Sigmoid colon (tissue), 7 donors: ENCODE measurements at regions of chr7 and their contacts with region 1.

Region 1: DNA sequence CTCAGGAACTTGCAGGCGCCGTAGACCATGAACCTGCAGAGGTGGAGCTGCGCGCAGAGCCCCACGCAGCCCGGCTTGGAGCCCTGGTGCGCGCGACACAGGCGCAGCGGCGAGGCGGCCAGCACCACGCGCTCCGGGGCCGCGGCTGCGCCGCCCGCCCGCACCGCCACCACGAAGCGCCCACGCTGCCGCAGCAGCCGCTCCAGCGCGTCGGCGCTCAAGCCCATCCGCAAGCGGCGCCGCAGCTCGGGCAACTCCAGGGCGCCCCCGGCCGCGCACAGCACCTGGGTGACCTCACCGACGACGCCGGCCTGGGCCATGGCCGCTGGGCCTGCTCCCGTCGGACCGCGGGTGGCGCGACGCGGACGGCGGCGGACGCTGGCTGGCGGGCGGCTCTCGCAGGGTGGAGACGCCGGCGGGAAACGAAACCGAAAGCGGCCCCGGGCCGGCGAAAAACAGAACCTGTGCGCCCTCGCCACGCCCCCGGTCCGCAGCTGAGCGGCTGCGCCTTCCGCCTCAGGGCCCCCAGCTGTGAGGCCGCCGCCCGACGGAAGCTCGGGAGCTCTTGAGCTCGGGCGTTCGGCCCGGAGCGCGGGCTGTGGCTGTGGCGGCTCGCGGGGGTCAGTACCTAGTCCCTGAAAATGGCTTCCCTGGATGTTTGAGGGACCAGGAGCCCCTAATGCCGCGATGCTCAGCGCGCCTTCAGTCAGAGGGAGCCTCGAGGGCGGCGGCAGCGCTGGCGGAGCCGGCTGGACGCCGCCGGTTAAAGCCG is at the start of gene PARP12:
- DNase-seq: peak; percentile 90
- H3K4me3 ChIP-seq: peak within 1 kb of the TSS; percentile 70 to 82 (median 72)
- H3K27ac ChIP-seq: peak within 1 kb of the TSS; percentile 88 to 91 (median 90)
- H3K4me1 ChIP-seq: peaks cover 0 to 36% (median 22%) of the 10 kb centered on the region in 4 donors
- H3K27me3 ChIP-seq: no peaks in the 10 kb centered on the region
- CTCF ChIP-seq: no peak
- EP300 ChIP-seq: no peak
- POLR2A ChIP-seq: peak in 1 of 2 donors; percentile 23
- total RNA-seq, gene PARP12: 20.6 to 29.9 (median 22.9) TPM

Region 2: DNA sequence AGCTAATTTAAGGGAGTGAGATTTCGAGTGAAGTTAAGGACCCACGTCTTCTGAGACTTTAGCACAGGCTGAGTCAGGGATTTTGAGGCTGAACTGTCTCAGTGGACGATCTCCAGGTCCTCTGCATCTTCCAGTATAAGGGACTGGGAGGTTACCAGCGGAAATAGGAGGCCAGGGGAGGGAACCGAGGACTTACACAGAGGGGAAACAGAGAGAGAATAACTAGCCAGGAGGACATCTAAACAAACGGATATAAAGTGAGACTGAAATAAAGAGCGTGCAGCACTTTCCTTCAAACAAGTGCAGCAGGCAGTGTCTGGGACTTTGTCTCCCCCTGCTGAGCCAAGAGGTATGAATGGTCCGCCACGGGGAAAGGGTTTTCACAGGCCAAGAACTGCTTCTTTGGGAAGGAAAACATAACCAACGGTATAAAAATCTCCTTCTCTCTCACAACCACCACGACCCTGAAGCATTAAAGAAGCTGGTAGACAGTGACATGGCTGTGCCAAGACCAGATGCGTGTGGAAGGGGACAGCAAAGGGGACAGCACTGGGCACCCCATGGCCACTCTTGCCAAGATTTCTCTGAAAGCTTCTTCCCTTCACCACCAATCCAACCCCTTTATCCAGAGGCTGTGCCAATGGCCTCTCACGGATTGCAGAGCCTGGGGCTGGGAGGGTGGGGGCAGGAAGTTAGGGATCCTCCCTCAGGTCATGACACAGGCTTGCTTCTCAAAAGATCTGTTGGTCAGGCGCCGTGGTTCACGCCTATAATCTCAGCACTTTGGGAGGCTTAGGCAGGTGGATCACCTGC is 263.6 kb after region 1 on chr7:
- intact Hi-C with region 1: loop called (anchors 2 kb)
- DNase-seq: peak; percentile 87
- H3K4me3 ChIP-seq: peak overlapping the region in 2 of 4 donors; percentile 15 to 18
- H3K27ac ChIP-seq: peak overlapping the region; percentile 47 to 71 (median 56)
- H3K4me1 ChIP-seq: peaks cover 0 to 38% (median 24%) of the 10 kb centered on the region in 4 donors
- H3K27me3 ChIP-seq: no peaks in the 10 kb centered on the region
- CTCF ChIP-seq: peak; percentile 36 to 70 (median 65)
- EP300 ChIP-seq: no peak
- POLR2A ChIP-seq: no peak